Colonic mucosa (tissue), 4 donors: ENCODE measurements at regions of chr5 and their contacts with region 1.

Region 1: GRCh38 chr5:173618927-173619519 is 2.6 kb upstream of the BOD1 start:
- DNase-seq: peak; percentile 57
- H3K4me3 ChIP-seq: no peak overlapping the region
- H3K27ac ChIP-seq: no peak overlapping the region
- H3K4me1 ChIP-seq: peaks cover 10% of the 10 kb centered on the region
- H3K27me3 ChIP-seq: no peaks in the 10 kb centered on the region
- CTCF ChIP-seq: peak; percentile 50

Region 2: DNA sequence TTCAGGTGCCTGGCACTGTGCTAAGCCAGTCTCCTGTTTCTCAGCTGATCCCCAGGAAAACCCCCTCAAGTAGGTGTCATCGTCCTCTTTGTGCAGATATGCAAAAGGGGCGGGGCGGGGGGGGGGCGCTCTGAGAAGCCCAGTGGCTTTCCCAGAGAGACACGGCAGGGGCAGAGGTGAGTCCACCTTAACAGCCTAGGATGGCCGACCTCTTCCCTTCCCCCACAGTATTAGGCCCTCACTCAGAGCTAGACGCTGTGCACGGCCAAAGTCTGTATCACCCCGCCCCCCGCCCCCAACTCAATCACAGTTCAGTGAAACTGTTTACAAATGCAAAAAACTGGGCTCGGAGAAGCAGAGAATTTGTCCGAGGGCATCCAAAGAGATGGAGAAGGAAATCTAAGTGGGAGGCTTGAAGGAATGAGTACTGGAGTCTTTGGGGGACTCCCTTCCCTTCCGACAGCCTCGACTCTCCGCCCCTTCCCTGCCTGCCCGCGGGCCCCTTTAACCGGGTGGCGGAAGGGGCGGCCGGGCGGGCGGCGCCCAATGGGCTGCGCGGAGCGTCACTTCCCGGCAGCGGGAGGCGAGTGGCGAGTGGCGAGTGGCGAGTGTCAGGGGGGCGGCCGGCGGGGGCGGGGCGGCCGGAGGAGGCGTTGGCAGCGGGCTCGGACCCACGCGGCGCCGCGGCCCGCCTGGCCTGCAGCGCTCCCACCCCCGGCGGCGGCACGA is 785.2 kb before region 1 on chr5 and contains the start of gene ERGIC1:
- intact Hi-C with region 1: no loop called
- DNase-seq: peak; percentile 90
- H3K4me3 ChIP-seq: peak within 1 kb of the TSS; percentile 83
- H3K27ac ChIP-seq: peak within 1 kb of the TSS; percentile 86
- H3K4me1 ChIP-seq: peaks cover 27% of the 10 kb centered on the region
- H3K27me3 ChIP-seq: no peaks in the 10 kb centered on the region
- CTCF ChIP-seq: no peak
- total RNA-seq, gene ERGIC1: 173 to 191 TPM

Region 3: GRCh38 chr5:173029499-173029921 is 589.5 kb before region 1 on chr5:
- intact Hi-C with region 1: no loop called
- DNase-seq: no peak
- H3K4me3 ChIP-seq: no peak overlapping the region
- H3K27ac ChIP-seq: peak overlapping the region; percentile 39
- H3K4me1 ChIP-seq: no peaks in the 10 kb centered on the region
- H3K27me3 ChIP-seq: no peaks in the 10 kb centered on the region
- CTCF ChIP-seq: no peak

Region 4: DNA sequence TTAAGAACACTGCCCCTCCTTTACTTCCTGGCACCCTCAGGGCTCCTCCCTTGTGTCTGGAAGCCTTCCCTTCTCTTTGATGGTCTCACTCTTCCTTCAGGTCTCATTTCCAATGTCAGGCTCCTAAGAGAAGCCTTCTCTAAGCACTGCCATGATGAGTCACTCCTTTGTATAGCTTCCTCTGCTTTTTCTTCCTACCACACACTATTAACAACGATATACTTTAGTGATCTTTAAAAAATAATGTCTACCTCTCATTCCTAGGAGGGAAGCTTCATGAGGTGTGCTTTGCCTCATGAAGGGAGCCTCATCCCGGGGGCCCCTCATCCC is 82.7 kb before region 1 on chr5:
- intact Hi-C with region 1: no loop called
- DNase-seq: no peak
- H3K4me3 ChIP-seq: no peak overlapping the region
- H3K27ac ChIP-seq: no peak overlapping the region
- H3K4me1 ChIP-seq: no peaks in the 10 kb centered on the region
- H3K27me3 ChIP-seq: no peaks in the 10 kb centered on the region
- CTCF ChIP-seq: no peak

Region 5: DNA sequence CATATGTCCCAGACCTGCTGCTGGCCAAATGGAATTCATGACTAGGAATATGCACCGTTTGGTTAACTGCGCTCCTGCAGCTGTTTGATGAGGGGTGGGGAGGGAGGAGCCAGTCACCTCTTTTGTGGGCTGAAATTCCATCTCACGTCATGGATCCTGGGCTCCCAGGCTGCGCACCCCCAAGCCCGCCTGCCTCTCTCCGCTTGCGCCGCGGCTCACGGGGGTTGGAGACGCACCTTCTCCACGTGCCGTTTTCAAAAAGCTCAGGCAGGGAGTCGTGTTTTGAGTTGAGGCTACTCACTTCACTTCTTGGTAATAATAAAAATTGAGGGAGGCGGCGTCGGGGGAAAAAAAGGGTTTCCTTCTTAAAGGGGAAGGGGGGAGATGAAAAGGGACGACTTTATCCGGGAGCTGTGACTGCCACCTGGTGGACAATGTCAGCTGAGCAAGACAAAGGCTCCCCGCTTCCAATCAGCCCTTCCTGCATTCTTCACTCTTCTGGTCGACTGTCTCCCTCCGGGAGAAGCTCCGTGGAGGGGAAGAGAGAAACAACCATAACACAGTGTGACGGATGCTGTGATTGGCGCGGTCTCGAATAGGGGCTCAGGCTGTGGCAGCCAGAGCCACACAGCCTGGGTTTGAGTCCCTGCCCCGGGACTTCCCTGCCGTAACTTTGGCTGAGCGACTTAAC is 354.0 kb after region 1 on chr5:
- intact Hi-C with region 1: loop called (anchors 2 kb)
- DNase-seq: peak; percentile 86
- H3K4me3 ChIP-seq: peak overlapping the region; percentile 40
- H3K27ac ChIP-seq: no peak overlapping the region
- H3K4me1 ChIP-seq: no peaks in the 10 kb centered on the region
- H3K27me3 ChIP-seq: no peaks in the 10 kb centered on the region
- CTCF ChIP-seq: peak; percentile 89

Region 6: DNA sequence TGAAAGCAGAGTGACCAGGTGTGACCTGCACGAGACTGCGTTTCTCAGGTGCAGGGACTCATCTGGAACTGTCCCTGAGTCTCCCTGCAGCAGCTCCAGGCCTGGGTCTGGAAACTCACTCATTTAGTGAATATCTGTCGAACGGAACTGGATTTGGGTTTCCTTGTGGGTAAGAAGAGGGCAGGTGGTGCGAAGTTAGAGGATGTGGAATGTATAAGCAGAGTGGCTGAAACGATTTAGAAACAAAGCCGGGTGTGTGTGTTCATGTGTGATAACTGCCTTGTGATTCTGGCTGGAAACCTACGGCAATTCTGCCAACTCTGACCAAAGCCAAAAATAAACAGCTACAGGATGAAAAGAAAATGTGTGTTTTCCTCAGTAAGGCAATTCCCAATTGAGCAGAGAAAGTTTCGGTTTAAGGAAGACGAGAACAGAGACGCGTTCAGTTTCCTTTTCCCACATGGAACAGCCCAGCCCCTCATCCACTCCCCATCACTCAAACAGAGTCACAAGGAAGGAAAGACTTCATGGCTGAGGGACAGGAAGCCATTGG is 556.8 kb after region 1 on chr5:
- intact Hi-C with region 1: no loop called
- DNase-seq: no peak
- H3K4me3 ChIP-seq: no peak overlapping the region
- H3K27ac ChIP-seq: no peak overlapping the region
- H3K4me1 ChIP-seq: no peaks in the 10 kb centered on the region
- H3K27me3 ChIP-seq: no peaks in the 10 kb centered on the region
- CTCF ChIP-seq: no peak